CD8-positive, alpha-beta T cell (primary cell): ENCODE measurements at regions of chr4 and their contacts with region 1.

Region 1: DNA sequence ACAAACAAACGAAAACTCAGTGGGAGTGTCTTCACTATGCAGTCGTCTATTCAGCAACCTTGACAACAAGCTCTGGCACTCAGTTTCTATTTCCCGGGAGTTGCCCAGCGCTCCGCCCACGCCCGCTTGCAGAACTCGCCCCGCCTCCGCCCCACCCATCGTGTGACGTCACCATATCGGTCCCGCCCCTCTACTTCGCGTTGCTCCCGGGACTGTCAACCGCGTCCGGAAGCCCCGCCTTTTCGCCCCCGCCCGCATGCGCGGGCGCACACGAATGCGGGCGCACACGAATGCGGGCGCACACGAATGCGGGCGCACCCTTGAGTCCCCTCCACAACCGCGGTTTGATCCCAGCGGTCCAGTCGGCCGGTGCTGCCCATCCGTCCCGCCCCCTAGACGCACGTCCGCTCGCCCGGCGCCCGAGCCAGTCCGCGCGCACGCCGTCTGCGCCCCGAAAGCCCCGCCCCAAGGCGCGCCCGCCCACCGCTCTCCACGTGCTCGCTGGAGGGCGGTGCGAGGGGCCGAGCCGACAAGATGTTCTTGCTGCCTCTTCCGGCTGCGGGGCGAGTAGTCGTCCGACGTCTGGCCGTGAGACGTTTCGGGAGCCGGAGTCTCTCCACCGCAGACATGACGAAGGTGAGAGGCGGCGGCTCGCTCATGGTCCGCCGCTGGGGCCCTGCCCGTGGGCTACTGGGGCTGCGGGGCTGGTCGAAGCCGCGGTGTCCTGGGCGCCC is at the start of gene LAP3:
- DNase-seq: peak; percentile 96 to 100 (median 99)
- ATAC-seq: peak; percentile 87
- H3K4me3 ChIP-seq: peak within 1 kb of the TSS; percentile 91 to 94
- H3K4me3 Mint-ChIP-seq: peak within 1 kb of the TSS; percentile 93
- H3K27ac ChIP-seq: peak within 1 kb of the TSS; percentile 95 to 96
- H3K27ac Mint-ChIP-seq: peak within 1 kb of the TSS; percentile 97
- H3K4me1 ChIP-seq: peaks cover 20% of the 10 kb centered on the region
- H3K4me1 Mint-ChIP-seq: peaks cover 24% of the 10 kb centered on the region
- H3K27me3 ChIP-seq: no peaks in the 10 kb centered on the region
- H3K27me3 Mint-ChIP-seq: no peaks in the 10 kb centered on the region
- CTCF ChIP-seq: no peak
- total RNA-seq, gene LAP3: 60.1 to 60.2 TPM

Region 2: DNA sequence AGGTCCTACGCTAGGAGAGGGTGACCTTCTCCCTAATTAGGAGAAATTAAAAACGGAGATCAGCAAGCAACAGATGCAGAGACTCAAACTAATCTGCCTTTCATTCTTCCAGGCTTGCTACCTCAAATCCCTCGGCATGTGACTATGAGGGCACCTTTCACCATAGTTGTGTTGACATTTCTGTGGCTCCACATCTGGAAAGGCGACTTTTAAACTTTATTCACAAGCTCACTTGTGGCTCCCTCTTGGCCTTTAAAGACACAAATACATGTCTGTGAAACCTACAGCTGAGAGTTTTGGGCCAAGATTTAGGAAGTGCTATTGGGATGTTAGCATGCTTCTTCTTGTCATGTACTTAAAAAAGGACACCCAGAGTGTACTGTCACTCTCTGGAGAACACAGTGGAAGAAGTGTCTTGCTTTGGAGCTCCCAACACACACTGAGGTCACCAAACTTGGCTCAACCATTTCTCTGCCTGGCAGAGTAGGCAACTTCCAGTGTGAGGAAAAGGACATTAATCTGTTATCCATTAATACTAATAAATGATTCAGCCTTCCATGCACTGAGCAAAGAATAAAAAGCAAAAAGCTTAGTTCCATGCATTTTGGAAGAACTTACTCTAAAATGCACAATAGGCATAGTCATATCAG is 738.7 kb before region 1 on chr4:
- CTCF ChIA-PET with region 1: no interaction called
- POLR2A ChIA-PET with region 1: no interaction called
- intact Hi-C with region 1: no loop called
- DNase-seq: no peak
- ATAC-seq: no peak
- H3K4me3 ChIP-seq: no peak overlapping the region
- H3K4me3 Mint-ChIP-seq: no peak overlapping the region
- H3K27ac ChIP-seq: no peak overlapping the region
- H3K27ac Mint-ChIP-seq: no peak overlapping the region
- H3K4me1 ChIP-seq: no peaks in the 10 kb centered on the region
- H3K4me1 Mint-ChIP-seq: no peaks in the 10 kb centered on the region
- H3K27me3 ChIP-seq: no peaks in the 10 kb centered on the region
- H3K27me3 Mint-ChIP-seq: peaks cover 2% of the 10 kb centered on the region
- CTCF ChIP-seq: no peak

Region 3: GRCh38 chr4:17336524-17336961 is 240.6 kb before region 1 on chr4:
- CTCF ChIA-PET with region 1: no interaction called
- POLR2A ChIA-PET with region 1: no interaction called
- intact Hi-C with region 1: loop called in 1 of 2 experiments (anchors 2 kb)
- DNase-seq: peak; percentile 32 to 90 (median 70)
- ATAC-seq: peak; percentile 95
- H3K4me3 ChIP-seq: no peak overlapping the region
- H3K4me3 Mint-ChIP-seq: peak overlapping the region; percentile 27
- H3K27ac ChIP-seq: peak overlapping the region in 1 of 2 experiments; percentile 44
- H3K27ac Mint-ChIP-seq: peak overlapping the region; percentile 91
- H3K4me1 ChIP-seq: peaks cover 17% of the 10 kb centered on the region
- H3K4me1 Mint-ChIP-seq: peaks cover 22% of the 10 kb centered on the region
- H3K27me3 ChIP-seq: no peaks in the 10 kb centered on the region
- H3K27me3 Mint-ChIP-seq: no peaks in the 10 kb centered on the region
- CTCF ChIP-seq: no peak

Region 4: DNA sequence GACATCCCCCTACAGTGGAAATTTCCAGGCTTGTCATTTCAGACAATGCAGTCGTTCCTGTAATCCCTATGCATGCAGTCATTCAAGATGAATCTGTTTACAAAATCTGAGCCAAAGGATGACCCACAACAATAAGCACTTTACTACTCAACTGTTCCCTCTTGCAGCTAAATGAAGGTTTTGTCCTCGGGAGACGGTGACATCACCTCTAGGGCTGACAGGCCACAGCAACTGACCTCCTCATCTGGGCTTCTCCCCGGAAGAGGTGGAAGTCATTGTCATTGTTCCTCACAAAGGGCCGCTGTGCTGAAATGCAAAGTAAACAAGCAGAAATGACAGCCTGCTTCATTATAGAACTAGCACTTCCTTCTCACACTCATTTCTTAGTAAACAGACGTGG is 32.9 kb before region 1 on chr4:
- CTCF ChIA-PET with region 1: interaction called, 15 read pairs
- POLR2A ChIA-PET with region 1: no interaction called
- intact Hi-C with region 1: loop called in 1 of 2 experiments (anchors 1 kb)
- DNase-seq: no peak
- ATAC-seq: no peak
- H3K4me3 ChIP-seq: no peak overlapping the region
- H3K4me3 Mint-ChIP-seq: no peak overlapping the region
- H3K27ac ChIP-seq: no peak overlapping the region
- H3K27ac Mint-ChIP-seq: no peak overlapping the region
- H3K4me1 ChIP-seq: no peaks in the 10 kb centered on the region
- H3K4me1 Mint-ChIP-seq: peaks cover 3% of the 10 kb centered on the region
- H3K27me3 ChIP-seq: no peaks in the 10 kb centered on the region
- H3K27me3 Mint-ChIP-seq: peaks cover 9% of the 10 kb centered on the region
- CTCF ChIP-seq: no peak

Region 5: GRCh38 chr4:17597517-17597916 is 20.4 kb after region 1 on chr4:
- CTCF ChIA-PET with region 1: no interaction called
- POLR2A ChIA-PET with region 1: no interaction called
- intact Hi-C with region 1: loop called in 1 of 2 experiments (anchors 2 kb)
- DNase-seq: no peak
- ATAC-seq: no peak
- H3K4me3 ChIP-seq: no peak overlapping the region
- H3K4me3 Mint-ChIP-seq: no peak overlapping the region
- H3K27ac ChIP-seq: no peak overlapping the region
- H3K27ac Mint-ChIP-seq: no peak overlapping the region
- H3K4me1 ChIP-seq: no peaks in the 10 kb centered on the region
- H3K4me1 Mint-ChIP-seq: no peaks in the 10 kb centered on the region
- H3K27me3 ChIP-seq: no peaks in the 10 kb centered on the region
- H3K27me3 Mint-ChIP-seq: no peaks in the 10 kb centered on the region
- CTCF ChIP-seq: no peak

Region 6: GRCh38 chr4:17810260-17811077 is 233.4 kb after region 1 on chr4 and contains the starts of genes DCAF16 and NCAPG:
- CTCF ChIA-PET with region 1: interaction called, 3 read pairs
- POLR2A ChIA-PET with region 1: interaction called, 3 read pairs
- intact Hi-C with region 1: loop called (anchors 1 kb)
- DNase-seq: peak; percentile 96 to 99 (median 99)
- ATAC-seq: peak; percentile 88
- H3K4me3 ChIP-seq: peak within 1 kb of the TSS; percentile 75 to 98
- H3K4me3 Mint-ChIP-seq: peak within 1 kb of the TSS; percentile 98
- H3K27ac ChIP-seq: peak within 1 kb of the TSS; percentile 88 to 97
- H3K27ac Mint-ChIP-seq: peak within 1 kb of the TSS; percentile 99
- H3K4me1 ChIP-seq: peaks cover 41% of the 10 kb centered on the region
- H3K4me1 Mint-ChIP-seq: peaks cover 54% of the 10 kb centered on the region
- H3K27me3 ChIP-seq: no peaks in the 10 kb centered on the region
- H3K27me3 Mint-ChIP-seq: no peaks in the 10 kb centered on the region
- CTCF ChIP-seq: no peak
- total RNA-seq, gene DCAF16: 82.2 to 83.4 TPM
- total RNA-seq, gene NCAPG: 0.52 to 1.3 TPM